ENCODE measurements at regions of chr1 and their contacts with region 1.

Region 1: GRCh38 chr1:27830621-27831424 is at the start of gene PPP1R8:
- DNase-seq: peak; percentile 92
- ATAC-seq: peak; percentile 99
- H3K4me3 ChIP-seq: peak within 1 kb of the TSS; percentile 74 to 98 (median 90)
- H3K4me3 Mint-ChIP-seq: peak within 1 kb of the TSS; percentile 94
- H3K27ac ChIP-seq: peak within 1 kb of the TSS; percentile 55 to 88
- H3K27ac Mint-ChIP-seq: peak within 1 kb of the TSS; percentile 93
- H3K4me1 ChIP-seq: peaks cover 12 to 17% of the 10 kb centered on the region in 2 donors
- H3K4me1 Mint-ChIP-seq: peaks cover 23% of the 10 kb centered on the region
- H3K27me3 ChIP-seq: no peaks in the 10 kb centered on the region
- H3K27me3 Mint-ChIP-seq: no peaks in the 10 kb centered on the region
- CTCF ChIP-seq: no peak
- total RNA-seq, gene PPP1R8: 45.1 and 45.4 TPM in 2 replicates

Region 2: DNA sequence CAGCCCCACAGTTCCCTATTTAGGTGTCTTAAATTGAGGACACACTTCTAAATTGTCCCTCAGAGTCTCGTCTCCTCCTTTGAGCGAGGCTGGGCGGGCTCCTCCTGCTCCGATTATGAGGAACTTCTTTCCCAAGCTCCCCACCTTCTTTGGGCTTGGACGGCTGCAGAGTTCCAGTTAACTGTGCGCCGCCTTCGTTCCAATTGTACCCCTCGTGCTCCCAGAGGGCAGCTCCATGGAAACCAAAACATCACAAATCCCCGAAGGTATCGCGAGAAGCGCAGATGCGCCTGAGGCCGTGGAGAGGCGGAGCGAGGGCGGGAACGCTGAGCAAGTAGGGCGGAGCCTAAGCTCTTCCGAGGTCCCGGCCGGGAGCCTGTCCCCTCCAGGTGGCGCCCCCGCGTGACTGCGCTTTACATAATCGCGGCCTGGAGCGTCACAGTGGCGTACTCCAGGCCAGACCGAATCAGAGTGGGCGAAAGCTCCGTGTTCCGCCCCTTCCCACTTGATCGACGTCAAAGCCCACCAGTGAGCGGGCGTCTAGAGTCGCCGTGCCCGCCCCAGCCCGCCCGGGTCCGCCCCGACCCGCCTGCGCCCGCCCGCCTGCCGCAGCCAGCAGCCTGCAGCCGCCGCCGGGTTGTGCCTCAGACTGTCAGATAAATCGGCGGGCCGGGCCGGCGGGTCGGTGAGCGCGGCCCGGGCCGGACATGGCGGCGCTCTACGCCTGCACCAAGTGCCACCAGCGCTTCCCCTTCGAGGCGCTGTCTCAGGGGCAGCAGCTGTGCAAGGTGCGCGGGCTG is 105.2 kb before region 1 on chr1 and contains the start of gene FAM76A:
- CTCF ChIA-PET with region 1: no interaction called
- POLR2A ChIA-PET with region 1: interaction called, 3 read pairs
- intact Hi-C with region 1: loop called (anchors 1 kb)
- DNase-seq: peak; percentile 100
- ATAC-seq: peak; percentile 91
- H3K4me3 ChIP-seq: peak within 1 kb of the TSS; percentile 68 to 94 (median 74)
- H3K4me3 Mint-ChIP-seq: peak within 1 kb of the TSS; percentile 94
- H3K27ac ChIP-seq: peak within 1 kb of the TSS; percentile 96 to 98
- H3K27ac Mint-ChIP-seq: peak within 1 kb of the TSS; percentile 98
- H3K4me1 ChIP-seq: peaks cover 17% of the 10 kb centered on the region in 2 donors
- H3K4me1 Mint-ChIP-seq: peaks cover 25% of the 10 kb centered on the region
- H3K27me3 ChIP-seq: no peaks in the 10 kb centered on the region
- H3K27me3 Mint-ChIP-seq: no peaks in the 10 kb centered on the region
- CTCF ChIP-seq: peak; percentile 27
- total RNA-seq, gene FAM76A: 25.0 and 28.5 TPM in 2 replicates

Region 3: GRCh38 chr1:28235755-28236655 is 405.2 kb after region 1 on chr1 and contains the start of gene ATP5IF1:
- CTCF ChIA-PET with region 1: no interaction called
- POLR2A ChIA-PET with region 1: no interaction called
- intact Hi-C with region 1: loop called (anchors 10 kb)
- DNase-seq: peak; percentile 96
- ATAC-seq: peak; percentile 96
- H3K4me3 ChIP-seq: peak within 1 kb of the TSS; percentile 80 to 99 (median 97)
- H3K4me3 Mint-ChIP-seq: no peak within 1 kb of the TSS
- H3K27ac ChIP-seq: peak within 1 kb of the TSS; percentile 72 to 73
- H3K27ac Mint-ChIP-seq: no peak within 1 kb of the TSS
- H3K4me1 ChIP-seq: peaks cover 17 to 40% of the 10 kb centered on the region in 2 donors
- H3K4me1 Mint-ChIP-seq: peaks cover 20% of the 10 kb centered on the region
- H3K27me3 ChIP-seq: no peaks in the 10 kb centered on the region
- H3K27me3 Mint-ChIP-seq: no peaks in the 10 kb centered on the region
- CTCF ChIP-seq: no peak
- total RNA-seq, gene ATP5IF1: 81.1 and 88.1 TPM in 2 replicates